ENCODE measurements at regions of chr17 and their contacts with region 1.

Region 1: DNA sequence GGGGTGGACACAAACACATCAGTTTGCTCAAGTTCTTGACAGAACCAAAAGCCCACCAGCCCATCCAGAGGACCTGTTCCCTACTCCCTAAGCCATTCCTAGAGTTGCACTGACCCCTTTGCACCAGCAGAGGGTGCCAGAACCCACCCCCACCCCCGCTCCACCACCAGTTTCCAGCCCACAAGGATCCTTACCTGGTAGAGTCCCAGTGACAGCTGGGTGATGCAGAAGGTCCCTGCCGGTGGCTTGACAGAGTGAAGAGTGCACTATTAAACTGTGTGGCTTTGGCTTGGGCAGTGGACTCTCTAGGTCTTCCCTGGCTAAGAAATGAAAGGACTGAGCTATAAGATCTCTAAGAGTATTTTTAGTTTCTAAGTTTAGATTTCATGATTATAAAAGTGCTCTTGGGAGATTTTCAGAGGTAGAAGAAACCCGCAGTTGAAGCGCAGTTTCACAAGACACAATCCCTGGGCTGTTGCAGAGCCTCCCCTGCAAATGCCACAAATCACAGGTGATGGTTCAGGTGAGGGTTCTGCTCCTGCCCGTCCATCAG is 73.3 kb upstream of the MTMR4 start:
- DNase-seq: peak; percentile 27
- ATAC-seq: peak; percentile 87
- H3K4me3 ChIP-seq: no peak overlapping the region
- H3K27ac ChIP-seq: no peak overlapping the region
- H3K4me1 ChIP-seq: no peaks in the 10 kb centered on the region
- H3K27me3 ChIP-seq: peaks cover 17% of the 10 kb centered on the region
- CTCF ChIP-seq: peak; percentile 78
- POLR2A ChIP-seq: no peak
- RAD21 ChIP-seq: peak; percentile 80

Region 2: GRCh38 chr17:58631523-58632323 is 43.9 kb after region 1 on chr17:
- CTCF ChIA-PET with region 1: no interaction called
- POLR2A ChIA-PET with region 1: no interaction called
- dilution Hi-C with region 1: no loop called
- in situ Hi-C with region 1: no loop called
- intact Hi-C with region 1: loop called (anchors 1 kb)
- DNase-seq: peak; percentile 99
- ATAC-seq: peak; percentile 94
- H3K4me3 ChIP-seq: peak overlapping the region; percentile 42; the same call in 1 of the 2 replicates
- H3K27ac ChIP-seq: peak overlapping the region; percentile 68; the same call in 1 of the 2 replicates
- H3K4me1 ChIP-seq: no peaks in the 10 kb centered on the region
- H3K27me3 ChIP-seq: no peaks in the 10 kb centered on the region
- CTCF ChIP-seq: 0 out of 2 replicates have a peak, but pooled peaks have one; percentile 22
- POLR2A ChIP-seq: peak; percentile 100
- RAD21 ChIP-seq: no peak

Region 3: GRCh38 chr17:58658804-58659713 is 71.3 kb after region 1 on chr17:
- CTCF ChIA-PET with region 1: no interaction called
- POLR2A ChIA-PET with region 1: no interaction called
- dilution Hi-C with region 1: no loop called
- in situ Hi-C with region 1: no loop called
- intact Hi-C with region 1: loop called (anchors 1 kb)
- DNase-seq: peak; percentile 99
- ATAC-seq: peak; percentile 94
- H3K4me3 ChIP-seq: peak overlapping the region; percentile 22
- H3K27ac ChIP-seq: peak overlapping the region; percentile 82
- H3K4me1 ChIP-seq: no peaks in the 10 kb centered on the region
- H3K27me3 ChIP-seq: no peaks in the 10 kb centered on the region
- CTCF ChIP-seq: no peak
- POLR2A ChIP-seq: peak; percentile 100
- RAD21 ChIP-seq: no peak

Region 4: DNA sequence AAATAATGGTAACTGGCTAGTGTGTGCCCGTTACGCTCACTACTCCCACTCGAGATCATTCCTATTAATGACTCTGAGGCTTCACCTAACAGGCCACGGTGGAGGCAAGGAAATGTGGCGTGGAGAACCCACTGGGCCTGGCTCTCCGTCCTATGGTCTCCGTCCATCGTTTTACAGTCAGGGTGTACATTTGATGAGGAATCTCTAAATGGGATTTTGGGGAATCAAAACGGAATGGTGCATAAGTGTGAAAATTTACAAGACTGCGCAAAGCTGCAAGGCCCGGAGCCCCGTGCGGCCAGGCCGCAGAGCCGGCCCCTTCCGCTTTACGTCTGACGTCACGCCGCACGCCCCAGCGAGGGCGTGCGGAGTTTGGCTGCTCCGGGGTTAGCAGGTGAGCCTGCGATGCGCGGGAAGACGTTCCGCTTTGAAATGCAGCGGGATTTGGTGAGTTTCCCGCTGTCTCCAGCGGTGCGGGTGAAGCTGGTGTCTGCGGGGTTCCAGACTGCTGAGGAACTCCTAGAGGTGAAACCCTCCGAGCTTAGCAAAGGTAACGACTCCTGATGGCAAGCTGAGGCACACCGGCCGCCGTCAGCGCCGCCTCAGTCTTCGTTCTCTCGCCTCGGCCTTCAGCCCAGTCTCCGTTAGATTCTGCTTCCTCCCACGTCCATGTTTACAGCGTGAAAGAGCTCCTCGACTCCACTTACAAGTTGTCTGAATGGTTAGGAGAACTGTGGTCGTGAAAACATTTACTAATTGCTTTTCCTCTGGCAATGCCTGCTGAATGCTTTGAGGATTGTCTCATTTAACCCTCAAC is 104.7 kb after region 1 on chr17 and contains the start of gene RAD51C:
- CTCF ChIA-PET with region 1: no interaction called
- POLR2A ChIA-PET with region 1: no interaction called
- dilution Hi-C with region 1: no loop called
- in situ Hi-C with region 1: no loop called
- intact Hi-C with region 1: loop called (anchors 5 kb)
- DNase-seq: peak; percentile 83
- ATAC-seq: peak; percentile 99
- H3K4me3 ChIP-seq: peak within 1 kb of the TSS; percentile 93
- H3K27ac ChIP-seq: peak within 1 kb of the TSS; percentile 67
- H3K4me1 ChIP-seq: peaks cover 3% of the 10 kb centered on the region
- H3K27me3 ChIP-seq: no peaks in the 10 kb centered on the region
- CTCF ChIP-seq: no peak
- POLR2A ChIP-seq: peak; percentile 26; the same call in 1 of the 2 replicates
- RAD21 ChIP-seq: no peak
- total RNA-seq, gene RAD51C: 21.1 and 28.6 TPM in 2 replicates

Region 5: GRCh38 chr17:58710936-58711775 is 123.4 kb after region 1 on chr17:
- CTCF ChIA-PET with region 1: interaction called, 4 read pairs
- POLR2A ChIA-PET with region 1: no interaction called
- dilution Hi-C with region 1: no loop called
- in situ Hi-C with region 1: no loop called
- intact Hi-C with region 1: loop called (anchors 2 kb)
- DNase-seq: peak; percentile 69
- ATAC-seq: peak; percentile 65; the same call in 1 of the 2 replicates
- H3K4me3 ChIP-seq: no peak overlapping the region
- H3K27ac ChIP-seq: no peak overlapping the region
- H3K4me1 ChIP-seq: no peaks in the 10 kb centered on the region
- H3K27me3 ChIP-seq: no peaks in the 10 kb centered on the region
- CTCF ChIP-seq: peak; percentile 79
- POLR2A ChIP-seq: no peak
- RAD21 ChIP-seq: peak; percentile 75

Measured in IMR-90 (cell line).